GM13977 (cell line): ENCODE measurements at regions of chr12 and their contacts with region 1.

Region 1: DNA sequence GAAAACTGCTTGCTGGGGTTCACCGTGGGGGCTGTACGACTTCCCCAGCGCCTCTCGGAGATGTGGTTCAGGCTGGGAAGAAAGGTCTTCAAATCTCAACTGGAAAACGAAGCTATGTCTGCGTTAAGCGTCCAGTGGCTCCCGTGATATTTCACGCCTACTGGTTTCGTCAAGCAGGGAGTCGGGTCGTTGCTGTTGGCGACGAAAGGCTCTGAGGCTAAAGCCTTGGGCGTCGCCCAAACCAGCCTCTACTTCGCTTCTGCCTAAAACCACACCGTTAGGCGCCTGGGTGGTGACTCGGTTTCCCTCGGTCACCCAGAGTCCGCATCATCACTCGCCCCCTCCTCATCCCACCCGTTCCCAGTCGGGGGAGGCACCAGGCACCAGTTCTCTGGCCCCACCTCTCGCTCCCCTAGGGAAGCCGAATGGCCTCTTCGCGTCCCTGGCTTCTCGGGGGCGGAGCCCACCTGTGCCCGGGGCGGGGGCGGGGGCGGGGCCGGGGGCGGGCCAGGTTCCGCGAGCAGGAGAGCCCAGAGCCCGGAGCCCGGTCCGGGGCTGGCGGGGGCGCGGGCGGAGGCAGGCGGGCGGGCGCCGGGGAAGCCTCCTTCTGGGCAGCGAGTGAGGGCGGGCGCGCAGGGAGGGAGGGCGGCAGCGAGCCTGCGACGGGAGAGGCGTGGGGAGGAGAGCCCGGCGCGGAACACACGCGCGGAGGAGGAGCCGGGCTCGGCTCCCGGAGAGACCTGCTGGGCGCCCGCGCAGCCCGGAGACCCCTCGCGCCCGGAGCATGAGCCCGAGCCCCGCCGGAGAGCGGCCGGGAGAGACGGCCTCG is at the start of gene B4GALNT3:
- DNase-seq: peak; percentile 75
- CTCF ChIP-seq: no peak

Region 2: GRCh38 chr12:510071-510825 is 50.6 kb after region 1 on chr12:
- in situ Hi-C with region 1: no loop called
- DNase-seq: no peak
- CTCF ChIP-seq: no peak

Region 3: GRCh38 chr12:546921-547845 is 87.5 kb after region 1 on chr12:
- in situ Hi-C with region 1: loop called (anchors 10 kb)
- DNase-seq: peak; percentile 93
- CTCF ChIP-seq: peak; percentile 100